Activated T-helper 2 cell treated with anti-CD3 and anti-CD28 coated beads, Interferon-gamma antibody, Interleukin-2, Interleukin-4, amounts not matched to agents 10 μg/mL and 5 μg/mL and 100 μg/mL, durations not matched to agents 14 hours and 24 hours and 36 hours (primary cell): ENCODE measurements at regions of chr10 and their contacts with region 1.

Region 1: DNA sequence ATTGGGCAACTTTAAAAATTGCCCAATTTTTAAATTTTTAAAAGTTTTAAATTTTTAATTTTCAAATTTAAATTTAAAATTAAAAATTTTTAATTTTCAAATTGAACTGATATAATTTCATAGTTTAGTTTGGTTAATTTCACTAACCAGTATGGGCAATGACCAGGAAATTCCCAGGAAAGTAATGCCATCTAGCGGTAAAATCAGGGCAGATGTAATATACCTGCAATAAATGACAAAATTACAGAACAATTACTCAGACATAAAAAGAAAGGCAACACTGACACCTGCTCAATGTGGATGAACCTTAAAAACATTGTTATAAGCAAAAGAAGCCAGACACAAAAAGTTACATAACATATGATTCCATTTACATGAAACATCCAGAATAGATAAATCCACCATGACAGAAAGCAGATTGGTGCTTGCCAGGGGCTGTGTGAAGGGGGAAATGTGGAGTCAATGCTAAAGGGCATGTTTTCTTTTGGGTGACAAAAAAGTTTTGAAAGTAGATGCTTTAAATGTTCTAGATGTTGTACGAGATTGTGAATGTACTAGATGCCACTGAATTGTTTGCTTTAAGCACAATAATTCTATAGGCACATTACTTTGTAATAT is 28.6 kb upstream of the SLC16A12 start:
- DNase-seq: no peak
- H3K4me3 Mint-ChIP-seq: no peak overlapping the region
- H3K27ac Mint-ChIP-seq: no peak overlapping the region
- H3K4me1 Mint-ChIP-seq: peaks cover 2% of the 10 kb centered on the region
- H3K27me3 Mint-ChIP-seq: peaks cover 36% of the 10 kb centered on the region

Region 2: GRCh38 chr10:89217057-89217990 is 346.6 kb before region 1 on chr10:
- intact Hi-C with region 1: loop called (anchors 5 kb)
- DNase-seq: peak; percentile 27
- H3K4me3 Mint-ChIP-seq: no peak overlapping the region
- H3K27ac Mint-ChIP-seq: no peak overlapping the region
- H3K4me1 Mint-ChIP-seq: peaks cover 6% of the 10 kb centered on the region
- H3K27me3 Mint-ChIP-seq: peaks cover 1% of the 10 kb centered on the region

Region 3: DNA sequence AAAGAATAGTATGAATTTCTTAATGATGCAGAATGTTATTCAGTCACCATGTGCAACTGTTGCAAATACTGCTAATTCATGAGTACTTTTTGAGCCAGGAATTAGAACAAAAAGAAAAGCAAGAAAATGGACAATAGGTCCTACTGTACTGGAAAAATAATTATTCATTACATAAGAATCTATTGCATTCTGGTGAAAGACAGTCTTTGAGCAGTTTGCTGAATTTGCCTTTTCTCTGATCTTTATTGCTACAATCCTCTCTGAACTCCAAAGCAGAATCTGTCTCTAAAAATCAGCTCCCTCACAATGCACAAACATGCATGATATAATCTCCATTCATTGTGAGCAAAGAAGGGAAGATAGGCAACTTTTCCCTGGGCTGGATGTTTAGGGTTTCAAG is 249.3 kb before region 1 on chr10:
- intact Hi-C with region 1: no loop called
- DNase-seq: no peak
- H3K4me3 Mint-ChIP-seq: no peak overlapping the region
- H3K27ac Mint-ChIP-seq: no peak overlapping the region
- H3K4me1 Mint-ChIP-seq: no peaks in the 10 kb centered on the region
- H3K27me3 Mint-ChIP-seq: peaks cover 44% of the 10 kb centered on the region

Region 4: DNA sequence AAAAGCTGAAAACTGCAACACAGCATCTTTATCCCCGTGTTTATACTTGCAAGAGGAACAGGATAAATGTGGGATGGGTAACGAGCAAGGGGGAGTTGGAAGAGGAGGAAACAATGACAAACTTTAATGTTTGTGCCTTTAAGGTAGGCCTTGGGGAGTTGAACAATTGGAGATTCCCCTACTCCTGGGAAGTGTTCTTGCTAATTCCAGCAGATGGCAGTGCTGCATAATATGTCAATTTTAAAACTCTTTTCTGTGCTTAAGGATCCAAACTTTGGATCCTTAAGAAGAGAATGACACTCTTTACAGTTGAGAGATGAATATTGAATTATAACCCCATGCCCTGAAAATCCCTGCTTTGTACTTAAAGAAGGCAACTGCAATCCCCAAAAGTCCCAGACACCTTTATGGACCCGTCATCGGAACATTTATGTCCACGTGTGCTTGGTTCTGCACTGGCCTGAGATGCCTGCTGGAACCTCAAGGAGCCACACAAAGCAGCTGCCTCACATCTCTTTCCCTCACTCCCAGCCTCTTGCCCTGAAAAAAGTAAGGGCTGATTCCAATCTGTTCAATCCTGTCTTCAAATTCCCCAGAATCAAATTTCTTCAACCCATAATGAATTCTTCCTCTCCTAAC is 137.6 kb before region 1 on chr10:
- intact Hi-C with region 1: loop called (anchors 1 kb)
- DNase-seq: no peak
- H3K4me3 Mint-ChIP-seq: no peak overlapping the region
- H3K27ac Mint-ChIP-seq: no peak overlapping the region
- H3K4me1 Mint-ChIP-seq: no peaks in the 10 kb centered on the region
- H3K27me3 Mint-ChIP-seq: peaks cover 18% of the 10 kb centered on the region

Region 5: DNA sequence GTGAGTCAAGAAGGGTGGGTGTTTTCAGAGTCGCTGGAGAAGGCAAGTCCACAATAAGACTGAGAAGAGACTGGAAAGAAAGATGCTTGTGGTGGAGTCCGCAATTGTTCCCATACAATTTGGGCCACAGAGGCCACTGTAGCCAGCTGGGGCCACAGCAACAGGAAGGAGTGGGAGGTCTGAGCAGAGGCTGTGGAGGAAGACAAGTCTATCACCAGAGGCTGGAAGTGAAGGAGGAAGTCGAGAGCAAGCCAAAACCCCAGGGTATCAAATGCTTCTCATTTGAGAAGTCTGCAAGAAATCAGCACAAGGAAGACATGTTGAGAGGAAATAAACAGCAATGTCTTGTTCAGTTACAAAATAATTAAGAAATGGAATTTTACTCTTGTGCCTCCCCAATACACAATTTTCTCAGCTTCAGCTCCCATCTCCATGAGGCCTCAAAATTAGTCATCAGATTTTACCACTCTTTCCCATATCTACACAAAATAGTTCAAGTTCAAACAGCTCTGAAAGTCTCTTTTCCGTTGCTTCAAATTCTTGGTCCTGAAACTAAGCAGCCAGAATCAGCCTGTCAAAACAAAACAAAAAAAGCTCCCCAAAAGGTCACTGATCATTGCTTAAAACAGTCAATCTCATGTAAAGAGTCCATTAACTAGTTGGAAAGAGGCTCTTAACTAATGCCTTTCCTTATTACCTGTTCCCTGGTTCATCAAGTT is 60.2 kb before region 1 on chr10:
- intact Hi-C with region 1: no loop called
- DNase-seq: no peak
- H3K4me3 Mint-ChIP-seq: no peak overlapping the region
- H3K27ac Mint-ChIP-seq: peak overlapping the region; percentile 35
- H3K4me1 Mint-ChIP-seq: peaks cover 12% of the 10 kb centered on the region
- H3K27me3 Mint-ChIP-seq: peaks cover 21% of the 10 kb centered on the region